PC-3 (cell line): ENCODE measurements at regions of chr19 and their contacts with region 1.

Region 1: DNA sequence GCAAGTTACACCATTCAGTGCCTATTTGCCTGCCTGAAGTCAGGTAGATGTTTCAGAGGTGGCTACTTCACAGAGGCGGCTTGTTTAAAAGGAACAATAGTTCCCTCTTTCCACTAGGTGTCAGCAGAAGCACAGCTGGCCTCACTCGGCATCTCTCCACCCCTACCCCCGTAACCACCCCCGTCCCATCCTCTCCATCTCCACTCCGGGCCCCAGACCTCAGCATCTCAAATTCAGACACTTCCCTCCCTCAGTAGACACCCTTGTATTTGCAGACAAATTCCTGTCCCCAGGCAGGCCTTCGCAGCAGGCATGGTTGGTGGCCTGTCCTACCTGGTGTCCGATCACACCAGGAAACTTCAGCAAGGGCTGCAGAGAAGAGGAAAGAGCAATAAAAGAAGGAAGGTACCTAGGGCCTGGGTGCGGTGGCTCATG is 9.1 kb upstream of the DPP9 start:
- DNase-seq: peak; percentile 87
- ATAC-seq: peak; percentile 93
- H3K4me3 ChIP-seq: peak overlapping the region; percentile 36; the same call in 1 of the 2 replicates
- H3K27ac ChIP-seq: no peak overlapping the region
- H3K4me1 ChIP-seq: no peaks in the 10 kb centered on the region
- H3K27me3 ChIP-seq: no peaks in the 10 kb centered on the region
- CTCF ChIP-seq: peak; percentile 87

Region 2: GRCh38 chr19:4803736-4804695 is 71.3 kb after region 1 on chr19:
- CTCF ChIA-PET with region 1: interaction called, 5 read pairs
- POLR2A ChIA-PET with region 1: no interaction called
- intact Hi-C with region 1: loop called (anchors 1 kb)
- DNase-seq: peak; percentile 80
- ATAC-seq: peak; percentile 78
- H3K4me3 ChIP-seq: no peak overlapping the region
- H3K27ac ChIP-seq: no peak overlapping the region
- H3K4me1 ChIP-seq: peaks cover 14% of the 10 kb centered on the region
- H3K27me3 ChIP-seq: no peaks in the 10 kb centered on the region
- CTCF ChIP-seq: peak; percentile 96